ENCODE measurements at regions of chr2 and their contacts with region 1.

Region 1: GRCh38 chr2:204871231-204871953 is 326.1 kb downstream of the PARD3B start:
- DNase-seq: peak; percentile 66
- H3K4me3 Mint-ChIP-seq: no peak overlapping the region
- H3K27ac Mint-ChIP-seq: no peak overlapping the region
- H3K4me1 Mint-ChIP-seq: peaks cover 21% of the 10 kb centered on the region
- H3K27me3 Mint-ChIP-seq: peaks cover 15% of the 10 kb centered on the region

Region 2: GRCh38 chr2:204931562-204931961 is 60.2 kb after region 1 on chr2:
- intact Hi-C with region 1: no loop called
- DNase-seq: no peak
- H3K4me3 Mint-ChIP-seq: no peak overlapping the region
- H3K27ac Mint-ChIP-seq: no peak overlapping the region
- H3K4me1 Mint-ChIP-seq: peaks cover 2% of the 10 kb centered on the region
- H3K27me3 Mint-ChIP-seq: peaks cover 2% of the 10 kb centered on the region

Region 3: GRCh38 chr2:204988836-204989235 is 117.4 kb after region 1 on chr2:
- intact Hi-C with region 1: no loop called
- DNase-seq: no peak
- H3K4me3 Mint-ChIP-seq: no peak overlapping the region
- H3K27ac Mint-ChIP-seq: no peak overlapping the region
- H3K4me1 Mint-ChIP-seq: peaks cover 3% of the 10 kb centered on the region
- H3K27me3 Mint-ChIP-seq: peaks cover 4% of the 10 kb centered on the region

Region 4: DNA sequence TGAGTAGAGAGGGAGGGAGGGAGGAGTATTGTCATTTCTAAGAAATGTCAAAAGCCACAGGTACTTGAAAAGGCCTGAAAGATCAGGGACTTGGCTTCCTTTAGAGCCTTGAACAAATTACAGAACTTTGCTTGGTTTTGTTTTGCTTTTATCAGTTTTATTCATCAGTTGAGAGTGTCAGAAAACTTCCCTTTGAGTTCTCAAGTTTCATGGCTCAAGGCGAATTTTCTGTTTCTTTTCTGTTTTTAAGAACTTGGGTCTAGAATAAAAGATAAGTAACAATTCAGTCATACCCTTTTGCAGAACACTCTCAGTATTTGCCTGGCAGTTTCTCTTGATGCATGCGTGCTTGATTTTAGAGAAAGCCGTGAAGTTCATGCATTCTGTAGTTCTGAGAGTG is 205.8 kb after region 1 on chr2:
- intact Hi-C with region 1: loop called (anchors 1 kb)
- DNase-seq: peak; percentile 79
- H3K4me3 Mint-ChIP-seq: peak overlapping the region; percentile 66
- H3K27ac Mint-ChIP-seq: peak overlapping the region; percentile 62
- H3K4me1 Mint-ChIP-seq: peaks cover 38% of the 10 kb centered on the region
- H3K27me3 Mint-ChIP-seq: no peaks in the 10 kb centered on the region

Region 5: DNA sequence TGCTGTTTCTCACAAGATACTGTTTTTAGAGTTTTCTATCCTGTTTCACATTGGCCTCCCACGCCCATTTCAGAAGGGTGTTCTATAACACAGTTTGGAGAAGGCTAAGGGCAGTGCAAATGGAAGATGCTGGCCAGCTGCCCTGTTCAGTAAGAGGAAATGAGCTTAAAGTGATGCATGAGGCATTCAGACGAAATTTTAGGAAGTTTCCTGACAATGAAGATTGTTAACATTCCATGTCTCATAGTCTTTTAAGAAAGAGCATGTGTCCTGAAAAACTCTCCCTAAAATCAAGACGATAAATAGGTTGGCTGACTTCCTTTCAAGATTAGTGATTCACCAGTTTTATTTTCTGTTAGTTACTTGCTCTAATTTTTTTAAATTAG is 326.7 kb after region 1 on chr2:
- intact Hi-C with region 1: loop called (anchors 10 kb)
- DNase-seq: no peak
- H3K4me3 Mint-ChIP-seq: no peak overlapping the region
- H3K27ac Mint-ChIP-seq: no peak overlapping the region
- H3K4me1 Mint-ChIP-seq: no peaks in the 10 kb centered on the region
- H3K27me3 Mint-ChIP-seq: no peaks in the 10 kb centered on the region

Region 6: GRCh38 chr2:205474741-205475415 is 603.5 kb after region 1 on chr2:
- intact Hi-C with region 1: loop called (anchors 10 kb)
- DNase-seq: no peak
- H3K4me3 Mint-ChIP-seq: no peak overlapping the region
- H3K27ac Mint-ChIP-seq: no peak overlapping the region
- H3K4me1 Mint-ChIP-seq: peaks cover 3% of the 10 kb centered on the region
- H3K27me3 Mint-ChIP-seq: peaks cover 43% of the 10 kb centered on the region